ENCODE measurements at regions of chr1 and their contacts with region 1.

Region 1: DNA sequence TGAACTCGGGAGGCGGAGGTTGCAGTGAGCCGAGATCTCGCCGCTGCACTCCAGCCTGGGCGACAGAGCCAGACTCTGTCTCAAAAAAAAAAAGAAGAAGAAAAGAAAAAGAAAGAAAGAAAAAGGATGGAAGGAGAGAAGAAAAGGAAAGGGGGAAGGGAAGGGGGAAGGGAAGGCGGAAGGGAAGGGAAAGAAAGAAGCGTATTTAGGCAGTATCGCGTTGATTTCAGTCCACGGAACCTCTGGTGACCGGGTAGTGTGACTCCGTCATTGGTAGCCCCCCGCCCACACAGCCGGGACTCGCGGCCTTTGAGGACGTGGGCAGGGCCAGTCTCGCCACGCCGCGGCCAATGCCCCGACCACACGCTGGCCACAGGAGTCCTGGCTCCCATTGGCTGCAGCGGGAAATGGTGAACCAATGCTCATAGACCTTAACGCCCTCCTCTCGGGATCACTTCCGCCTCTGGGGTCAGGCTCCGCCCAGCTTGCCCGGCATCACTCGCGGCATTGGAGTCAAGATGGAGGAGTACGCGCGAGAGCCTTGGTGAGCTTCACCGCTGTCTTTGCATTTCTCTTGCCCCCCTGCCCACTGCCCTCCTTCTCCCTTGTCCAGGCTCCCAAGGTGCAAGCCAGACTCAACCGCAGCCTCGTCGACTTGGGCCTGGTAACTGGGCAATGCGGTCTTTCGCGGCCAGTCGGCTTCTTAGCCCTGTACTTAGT is at the start of gene TIMM17A:
- DNase-seq: peak; percentile 95
- ATAC-seq: peak; percentile 99
- H3K4me3 ChIP-seq: peak within 1 kb of the TSS; percentile 72 to 98 (median 75)
- H3K4me3 Mint-ChIP-seq: peak within 1 kb of the TSS; percentile 98
- H3K27ac ChIP-seq: peak within 1 kb of the TSS; percentile 73 to 89
- H3K27ac Mint-ChIP-seq: peak within 1 kb of the TSS; percentile 96
- H3K4me1 ChIP-seq: peaks cover 12 to 15% of the 10 kb centered on the region in 2 donors
- H3K4me1 Mint-ChIP-seq: peaks cover 26% of the 10 kb centered on the region
- H3K27me3 ChIP-seq: no peaks in the 10 kb centered on the region
- H3K27me3 Mint-ChIP-seq: no peaks in the 10 kb centered on the region
- CTCF ChIP-seq: no peak
- total RNA-seq, gene TIMM17A: 31.5 and 32.3 TPM in 2 replicates

Region 2: DNA sequence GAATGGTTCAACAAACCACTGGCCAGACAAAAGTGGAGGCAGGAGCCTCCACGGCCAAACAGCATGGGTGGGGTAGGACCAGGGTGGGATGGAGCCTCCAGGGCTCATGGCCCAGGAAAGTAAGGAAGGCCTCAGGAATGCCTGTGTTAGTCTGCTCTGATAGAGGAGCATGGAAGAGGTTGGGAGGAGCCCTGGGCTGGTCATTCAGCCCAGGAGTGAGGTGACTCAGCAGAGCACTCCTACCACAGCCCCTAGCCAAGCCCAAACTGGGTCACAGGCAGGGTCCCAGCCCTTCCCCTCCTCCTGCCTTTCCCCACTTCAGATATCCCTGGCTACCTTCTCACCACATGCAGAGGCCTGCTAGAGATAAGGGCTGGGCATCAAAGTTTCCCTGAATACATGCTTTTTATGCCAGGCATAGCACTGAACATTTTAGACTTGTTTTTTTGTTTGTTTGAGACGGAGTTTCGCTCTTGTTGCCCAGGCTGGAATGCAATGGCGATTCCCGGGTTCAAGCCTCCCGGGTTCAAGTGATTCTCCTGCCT is 69.6 kb before region 1 on chr1:
- CTCF ChIA-PET with region 1: no interaction called
- POLR2A ChIA-PET with region 1: no interaction called
- intact Hi-C with region 1: no loop called
- DNase-seq: no peak
- ATAC-seq: no peak
- H3K4me3 ChIP-seq: no peak overlapping the region
- H3K4me3 Mint-ChIP-seq: no peak overlapping the region
- H3K27ac ChIP-seq: no peak overlapping the region
- H3K27ac Mint-ChIP-seq: no peak overlapping the region
- H3K4me1 ChIP-seq: peaks cover 31 to 40% of the 10 kb centered on the region in 2 donors
- H3K4me1 Mint-ChIP-seq: peaks cover 36% of the 10 kb centered on the region
- H3K27me3 ChIP-seq: peaks cover 0 to 43% (median 31%) of the 10 kb centered on the region in 4 experiments
- H3K27me3 Mint-ChIP-seq: peaks cover 26% of the 10 kb centered on the region
- CTCF ChIP-seq: no peak

Region 3: DNA sequence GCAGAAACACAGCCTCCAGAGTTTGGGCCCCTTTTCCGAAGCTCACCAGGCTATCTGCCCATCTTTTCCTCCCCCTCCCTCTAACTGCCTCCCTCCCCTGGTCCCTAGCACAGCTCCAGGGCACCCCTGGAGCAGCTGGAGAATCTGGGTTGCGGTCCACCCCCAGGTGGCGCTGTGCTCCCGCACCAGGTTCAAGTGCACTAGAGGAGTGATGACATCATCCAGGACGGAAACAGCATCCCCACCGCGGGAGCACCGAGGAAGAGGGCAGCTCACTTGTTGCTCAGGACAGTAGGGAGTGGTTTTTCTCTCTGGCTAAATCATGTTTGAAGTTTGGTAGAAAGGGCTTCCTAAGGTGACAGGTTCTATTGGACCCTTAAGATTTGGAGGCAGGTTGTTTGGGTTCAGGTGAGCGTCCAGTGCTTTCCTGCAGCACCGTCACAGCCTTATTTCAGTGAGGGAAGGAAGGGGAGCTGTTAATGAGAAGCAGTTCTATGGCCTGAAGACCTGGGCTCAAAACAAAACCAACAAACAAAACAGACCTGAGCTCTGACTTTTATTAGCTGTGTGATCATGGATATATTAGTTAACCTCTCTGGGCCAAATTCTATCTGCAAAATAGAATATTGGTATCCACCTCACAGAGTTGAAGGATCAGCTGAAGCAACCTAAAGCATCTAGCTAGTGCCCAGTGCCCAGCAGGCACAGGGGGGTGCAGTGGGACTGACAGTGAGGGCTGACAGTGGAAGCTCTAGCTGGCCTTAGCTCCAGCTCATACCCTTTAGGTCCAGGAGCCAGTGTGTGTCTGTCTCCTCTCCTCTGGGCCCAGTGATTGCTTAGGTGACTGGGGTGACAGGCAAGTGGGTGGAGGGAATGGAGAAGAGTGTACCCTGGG is 59.0 kb before region 1 on chr1:
- CTCF ChIA-PET with region 1: no interaction called
- POLR2A ChIA-PET with region 1: no interaction called
- intact Hi-C with region 1: loop called (anchors 1 kb)
- DNase-seq: peak; percentile 72
- ATAC-seq: peak; percentile 64
- H3K4me3 ChIP-seq: no peak overlapping the region
- H3K4me3 Mint-ChIP-seq: peak overlapping the region; percentile 37
- H3K27ac ChIP-seq: no peak overlapping the region
- H3K27ac Mint-ChIP-seq: no peak overlapping the region
- H3K4me1 ChIP-seq: peaks cover 0 to 4% of the 10 kb centered on the region in 2 donors
- H3K4me1 Mint-ChIP-seq: peaks cover 5% of the 10 kb centered on the region
- H3K27me3 ChIP-seq: peaks cover 0 to 20% (median 2%) of the 10 kb centered on the region in 4 experiments
- H3K27me3 Mint-ChIP-seq: peaks cover 37% of the 10 kb centered on the region
- CTCF ChIP-seq: peak; percentile 76

Measured in B cell (primary cell).